A673 (cell line): ENCODE measurements at regions of chr17 and their contacts with region 1.

Region 1: DNA sequence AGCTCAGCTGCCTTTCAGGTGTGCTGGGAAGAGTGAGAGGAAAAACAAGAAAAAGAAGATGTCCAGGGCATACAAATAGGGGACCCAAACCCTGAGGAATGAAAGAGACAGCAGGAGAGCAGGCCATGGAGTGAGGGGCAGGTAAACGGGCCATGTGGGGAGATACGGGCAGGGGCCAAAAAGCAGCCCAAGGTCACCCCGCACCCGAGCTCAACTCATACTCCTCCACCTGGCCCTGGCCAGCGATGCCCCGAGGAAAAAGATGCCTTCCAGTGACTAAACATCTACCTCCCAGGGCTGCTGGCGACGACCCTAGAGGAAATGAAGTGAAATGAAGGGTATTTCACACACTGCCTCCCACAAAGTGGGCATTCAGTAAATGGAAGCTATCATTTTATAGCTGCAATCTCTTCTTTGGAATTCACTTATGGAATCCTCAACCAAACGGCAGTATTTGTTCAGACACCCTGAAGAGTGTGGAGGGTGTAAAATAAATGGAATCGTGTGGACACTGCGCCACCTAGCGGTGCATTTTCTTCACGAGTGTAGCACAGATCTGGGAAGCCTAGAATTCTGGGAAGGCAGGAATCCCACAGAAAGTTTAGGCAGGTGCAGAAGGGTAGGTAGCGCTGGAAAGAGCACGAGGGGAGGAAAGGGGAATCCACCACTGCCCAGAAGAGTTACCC is 14.9 kb downstream of the ELAC2 start:
- DNase-seq: peak; percentile 80
- H3K4me3 ChIP-seq: no peak overlapping the region
- H3K27ac ChIP-seq: no peak overlapping the region
- H3K4me1 ChIP-seq: peaks cover 10% of the 10 kb centered on the region
- H3K27me3 ChIP-seq: no peaks in the 10 kb centered on the region
- CTCF ChIP-seq: peak; percentile 91

Region 2: GRCh38 chr17:12133183-12133582 is 869.7 kb before region 1 on chr17:
- CTCF ChIA-PET with region 1: no interaction called
- POLR2A ChIA-PET with region 1: no interaction called
- intact Hi-C with region 1: no loop called
- DNase-seq: no peak
- H3K4me3 ChIP-seq: no peak overlapping the region
- H3K27ac ChIP-seq: no peak overlapping the region
- H3K4me1 ChIP-seq: no peaks in the 10 kb centered on the region
- H3K27me3 ChIP-seq: no peaks in the 10 kb centered on the region
- CTCF ChIP-seq: no peak

Region 3: DNA sequence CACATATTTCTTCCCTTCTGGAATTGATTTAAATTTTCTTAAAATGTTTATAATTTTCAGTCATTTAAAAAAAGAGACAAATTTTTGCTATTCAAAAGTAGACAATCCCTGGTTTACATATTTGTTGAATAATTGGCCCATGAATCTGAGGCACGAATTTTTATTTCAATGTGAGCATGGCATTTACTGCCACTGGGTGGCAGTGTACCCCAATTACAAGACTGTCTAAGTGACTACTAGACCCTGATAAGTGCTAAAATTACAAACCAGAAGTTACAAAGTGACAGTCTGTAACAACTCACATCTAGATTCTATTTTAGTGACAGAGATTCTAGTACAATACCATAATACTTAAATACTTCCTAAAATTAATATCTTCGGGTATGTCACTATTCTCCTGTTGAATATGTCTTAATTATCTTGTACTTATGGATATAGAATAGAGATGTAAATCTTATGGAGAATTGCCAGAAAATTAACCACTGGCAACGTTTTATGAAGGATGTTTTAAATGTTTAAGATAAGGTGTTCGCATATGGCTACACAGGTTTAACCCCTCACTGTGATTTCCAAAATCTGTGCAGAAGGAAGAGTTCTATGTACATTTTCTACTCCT is 746.4 kb before region 1 on chr17:
- CTCF ChIA-PET with region 1: no interaction called
- POLR2A ChIA-PET with region 1: no interaction called
- intact Hi-C with region 1: loop called (anchors 2 kb)
- DNase-seq: peak; percentile 64
- H3K4me3 ChIP-seq: no peak overlapping the region
- H3K27ac ChIP-seq: no peak overlapping the region
- H3K4me1 ChIP-seq: no peaks in the 10 kb centered on the region
- H3K27me3 ChIP-seq: peaks cover 17% of the 10 kb centered on the region
- CTCF ChIP-seq: peak; percentile 84

Region 4: GRCh38 chr17:12545877-12546513 is 456.9 kb before region 1 on chr17:
- CTCF ChIA-PET with region 1: interaction called, 3 read pairs
- POLR2A ChIA-PET with region 1: no interaction called
- intact Hi-C with region 1: loop called (anchors 5 kb)
- DNase-seq: peak; percentile 62
- H3K4me3 ChIP-seq: no peak overlapping the region
- H3K27ac ChIP-seq: no peak overlapping the region
- H3K4me1 ChIP-seq: no peaks in the 10 kb centered on the region
- H3K27me3 ChIP-seq: peaks cover 16% of the 10 kb centered on the region
- CTCF ChIP-seq: peak; percentile 77

Region 5: GRCh38 chr17:12744298-12744697 is 258.6 kb before region 1 on chr17:
- CTCF ChIA-PET with region 1: no interaction called
- POLR2A ChIA-PET with region 1: no interaction called
- intact Hi-C with region 1: loop called (anchors 10 kb)
- DNase-seq: no peak
- H3K4me3 ChIP-seq: no peak overlapping the region
- H3K27ac ChIP-seq: no peak overlapping the region
- H3K4me1 ChIP-seq: no peaks in the 10 kb centered on the region
- H3K27me3 ChIP-seq: no peaks in the 10 kb centered on the region
- CTCF ChIP-seq: no peak

Region 6: GRCh38 chr17:12928741-12929140 is 74.2 kb before region 1 on chr17:
- CTCF ChIA-PET with region 1: no interaction called
- POLR2A ChIA-PET with region 1: no interaction called
- intact Hi-C with region 1: loop called (anchors 5 kb)
- DNase-seq: peak; percentile 22
- H3K4me3 ChIP-seq: no peak overlapping the region
- H3K27ac ChIP-seq: no peak overlapping the region
- H3K4me1 ChIP-seq: peaks cover 20% of the 10 kb centered on the region
- H3K27me3 ChIP-seq: peaks cover 59% of the 10 kb centered on the region
- CTCF ChIP-seq: peak; percentile 36

Region 7: GRCh38 chr17:12983991-12984884 is 18.7 kb before region 1 on chr17:
- CTCF ChIA-PET with region 1: no interaction called
- POLR2A ChIA-PET with region 1: no interaction called
- intact Hi-C with region 1: no loop called
- DNase-seq: no peak
- H3K4me3 ChIP-seq: no peak overlapping the region
- H3K27ac ChIP-seq: no peak overlapping the region
- H3K4me1 ChIP-seq: no peaks in the 10 kb centered on the region
- H3K27me3 ChIP-seq: no peaks in the 10 kb centered on the region
- CTCF ChIP-seq: no peak